ENCODE measurements at regions of chr2 and their contacts with region 1.

Region 1: GRCh38 chr2:38377050-38377828 is at the start of gene ATL2:
- DNase-seq: peak; percentile 77
- H3K4me3 ChIP-seq: peak within 1 kb of the TSS; percentile 92
- H3K27ac ChIP-seq: peak within 1 kb of the TSS; percentile 83
- H3K27me3 ChIP-seq: peaks cover 2% of the 10 kb centered on the region
- CTCF ChIP-seq: 0 out of 2 replicates have a peak, but pooled peaks have one; percentile 3
- polyA plus RNA-seq, gene ATL2: 12.9 and 16.1 TPM in 2 replicates

Region 2: DNA sequence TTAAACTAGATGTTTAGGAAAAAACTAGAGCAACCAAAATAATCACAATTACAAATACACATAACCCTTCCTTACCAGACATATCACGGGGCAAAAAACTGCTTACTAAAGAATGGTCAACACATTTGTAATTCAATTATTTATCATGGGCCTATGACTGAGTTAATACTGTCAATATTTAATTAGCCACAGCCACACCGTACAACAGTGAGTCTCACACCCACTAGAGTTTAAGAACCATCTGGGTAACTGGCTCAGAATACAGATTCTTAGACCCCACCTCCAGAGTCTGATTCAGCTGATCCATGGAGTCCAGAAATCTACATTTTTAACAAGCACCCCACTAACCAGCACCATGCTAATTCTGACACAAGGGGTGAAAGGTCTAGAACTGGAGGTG is 15.0 kb before region 1 on chr2:
- CTCF ChIA-PET with region 1: interaction called, 10 read pairs
- POLR2A ChIA-PET with region 1: interaction called, 5 read pairs
- DNase-seq: no peak
- H3K4me3 ChIP-seq: no peak overlapping the region
- H3K27ac ChIP-seq: no peak overlapping the region
- H3K27me3 ChIP-seq: no peaks in the 10 kb centered on the region
- CTCF ChIP-seq: no peak